ENCODE measurements at regions of chr6 and their contacts with region 1.

Region 1: GRCh38 chr6:168363811-168364680 is 44.5 kb upstream of the DACT2 start:
- DNase-seq: peak; percentile 1
- ATAC-seq: no peak

Region 2: GRCh38 chr6:168157272-168158007 is 206.6 kb before region 1 on chr6:
- intact Hi-C with region 1: loop called in 1 of 2 experiments (anchors 5 kb)
- DNase-seq: no peak
- ATAC-seq: peak in 1 of 2 donors; percentile 87

Measured in left cardiac atrium (tissue), 4 donors.